H1 (cell line): ENCODE measurements at regions of chr3 and their contacts with region 1.

Region 1: DNA sequence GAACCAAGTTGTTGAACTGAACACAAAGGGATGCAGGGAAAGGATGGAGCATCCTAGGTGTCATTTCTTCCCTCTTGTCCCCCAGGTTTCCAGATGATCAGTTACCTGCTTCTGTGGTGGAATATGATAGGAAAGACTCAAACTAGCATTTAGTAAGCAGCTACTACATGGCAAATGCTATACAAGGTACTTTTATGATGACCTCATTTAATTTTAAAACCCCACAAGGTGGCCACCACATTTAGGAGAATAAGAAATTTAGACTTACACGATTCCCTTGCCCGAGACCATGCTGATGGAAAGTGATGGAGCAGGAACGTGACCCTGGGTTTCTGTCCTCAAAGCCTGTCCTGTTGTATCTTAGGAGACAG is 40.9 kb downstream of the CCR4 start:
- DNase-seq: no peak
- H3K4me3 ChIP-seq: no peak overlapping the region
- H3K27ac ChIP-seq: no peak overlapping the region
- H3K4me1 ChIP-seq: no peaks in the 10 kb centered on the region
- H3K27me3 ChIP-seq: no peaks in the 10 kb centered on the region
- CTCF ChIP-seq: no peak
- EP300 ChIP-seq: no peak
- POLR2A ChIP-seq: no peak
- RAD21 ChIP-seq: no peak

Region 2: GRCh38 chr3:32684800-32685542 is 307.3 kb before region 1 on chr3 and contains the start of gene CNOT10:
- CTCF ChIA-PET with region 1: no interaction called
- POLR2A ChIA-PET with region 1: no interaction called
- DNase-seq: peak; percentile 78 to 92
- H3K4me3 ChIP-seq: peak within 1 kb of the TSS; percentile 83 to 96 (median 86)
- H3K27ac ChIP-seq: peak within 1 kb of the TSS; percentile 51; the same call in 1 of the 2 replicates
- H3K4me1 ChIP-seq: peaks cover 0 to 9% (median 2%) of the 10 kb centered on the region in 4 experiments; a peak in 4 of 7 replicates
- H3K27me3 ChIP-seq: no peaks in the 10 kb centered on the region
- CTCF ChIP-seq: peak in 1 of 3 experiments; percentile 14; a peak in 1 of 4 replicates
- EP300 ChIP-seq: 0 out of 3 replicates have a peak, but pooled peaks of 1 of the 2 experiments have one; percentile 17
- POLR2A ChIP-seq: peak in 1 of 2 experiments; percentile 76; a peak in 2 of 3 replicates
- RAD21 ChIP-seq: 0 out of 4 replicates have a peak, but pooled peaks of 1 of the 2 experiments have one; percentile 0
- total RNA-seq, gene CNOT10: 55.9 and 61.0 TPM in 2 replicates

Region 3: DNA sequence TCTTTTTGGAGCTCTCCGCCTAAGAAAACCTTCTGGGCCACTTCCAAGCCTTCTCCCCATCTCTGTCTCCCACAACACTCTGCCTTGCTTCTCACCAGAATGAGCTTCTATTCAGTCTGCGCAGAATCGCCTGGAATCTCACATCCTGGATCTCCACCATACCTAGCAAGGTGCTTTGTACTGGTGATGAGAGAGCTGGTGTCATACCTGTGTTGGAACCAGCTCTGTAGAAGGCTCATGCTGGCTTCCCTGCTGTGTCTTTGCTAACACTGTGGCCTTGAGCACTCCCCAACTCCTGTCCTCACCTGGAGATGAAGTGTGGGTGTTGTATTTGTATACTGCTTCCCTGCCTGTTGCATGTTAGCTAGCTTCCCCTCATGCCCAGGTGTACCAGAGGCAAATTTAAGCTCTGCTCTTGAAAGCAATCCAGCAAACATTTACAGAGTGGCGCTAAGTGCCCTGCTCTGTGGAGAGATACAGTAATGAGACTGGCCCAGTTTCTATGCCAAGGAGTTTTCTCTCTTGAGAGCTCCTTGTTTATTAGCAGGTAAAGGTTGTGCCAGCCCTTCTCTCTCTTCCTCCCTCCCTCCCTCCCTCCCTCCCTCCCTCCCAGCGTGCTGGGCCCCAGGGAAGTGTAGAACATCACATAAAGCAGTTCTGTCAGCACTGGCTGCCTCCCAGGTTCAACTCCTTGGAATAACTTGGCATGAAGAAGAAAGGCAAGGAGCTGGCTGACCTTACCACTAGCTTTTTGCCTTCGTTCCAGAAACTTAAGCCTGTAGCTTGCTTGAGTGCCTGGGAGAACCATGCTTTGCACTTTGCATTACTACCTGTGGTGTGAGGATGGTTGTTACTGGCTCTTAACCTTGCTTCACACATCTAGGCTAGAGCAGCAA is 119.6 kb before region 1 on chr3:
- CTCF ChIA-PET with region 1: no interaction called
- POLR2A ChIA-PET with region 1: no interaction called
- DNase-seq: no peak
- H3K4me3 ChIP-seq: peak overlapping the region in 1 of 4 experiments; percentile 22; a peak in 1 of 8 replicates
- H3K27ac ChIP-seq: 0 out of 2 replicates have a peak overlapping the region, but pooled peaks have one; percentile 2
- H3K4me1 ChIP-seq: peaks cover 27 to 51% (median 46%) of the 10 kb centered on the region in 4 experiments
- H3K27me3 ChIP-seq: no peaks in the 10 kb centered on the region
- CTCF ChIP-seq: no peak
- EP300 ChIP-seq: no peak
- POLR2A ChIP-seq: no peak; a peak in 2 of 3 replicates
- RAD21 ChIP-seq: no peak

Region 4: DNA sequence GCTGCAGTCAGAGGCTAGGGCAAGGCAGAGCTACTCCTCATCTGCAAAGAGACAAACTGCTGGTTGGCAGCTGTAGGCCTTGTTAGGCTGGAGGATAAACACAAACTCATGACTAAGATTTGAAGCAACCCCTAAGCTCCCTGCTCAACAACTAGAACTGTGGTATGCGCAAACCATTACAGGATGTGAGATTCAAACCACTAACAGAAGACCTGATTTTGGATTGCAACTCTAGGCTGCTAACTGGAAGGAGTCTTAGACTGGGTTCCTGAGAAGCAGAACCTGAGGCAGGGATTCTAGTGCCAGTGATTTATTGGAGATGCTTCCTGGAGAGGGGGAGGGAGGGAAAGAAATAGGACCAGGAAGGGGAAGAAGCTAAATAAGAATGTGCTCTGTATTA is 18.3 kb before region 1 on chr3:
- CTCF ChIA-PET with region 1: interaction called, 19 read pairs
- POLR2A ChIA-PET with region 1: interaction called, 5 read pairs
- DNase-seq: no peak
- H3K4me3 ChIP-seq: no peak overlapping the region
- H3K27ac ChIP-seq: no peak overlapping the region
- H3K4me1 ChIP-seq: 0 out of 7 replicates have a peak, but pooled peaks cover 0 to 2% (median 0%) of the 10 kb centered on the region in 4 experiments
- H3K27me3 ChIP-seq: no peaks in the 10 kb centered on the region
- CTCF ChIP-seq: no peak
- EP300 ChIP-seq: no peak
- POLR2A ChIP-seq: no peak
- RAD21 ChIP-seq: no peak